AG04449 (cell line): ENCODE measurements at regions of chr21 and their contacts with region 1.

Region 1: GRCh38 chr21:17819114-17819876 is at the start of gene C21orf91:
- DNase-seq: peak; percentile 19
- H3K4me3 ChIP-seq: peak within 1 kb of the TSS; percentile 87
- CTCF ChIP-seq: no peak

Region 2: DNA sequence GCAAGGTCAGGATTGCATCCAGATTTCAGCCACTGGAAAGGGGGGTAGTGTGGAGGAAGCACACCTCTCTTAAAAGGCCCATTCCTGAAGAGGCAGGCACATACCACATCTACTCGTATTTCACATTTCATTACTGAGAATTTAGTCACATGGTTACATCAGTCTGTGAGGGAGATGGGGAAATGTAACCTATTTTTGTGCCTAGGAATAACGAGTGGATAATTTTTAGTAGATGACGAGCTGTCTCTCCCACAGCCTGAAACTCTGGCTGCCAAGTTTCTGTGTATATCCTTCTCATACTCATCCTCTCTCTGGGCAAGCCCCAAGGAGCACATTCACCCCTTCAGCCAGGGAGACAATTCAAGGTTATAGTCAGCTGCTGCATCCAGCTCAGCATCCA is 10.2 kb after region 1 on chr21:
- CTCF ChIA-PET with region 1: interaction called, 5 read pairs
- POLR2A ChIA-PET with region 1: interaction called, 10 read pairs
- DNase-seq: peak; percentile 44
- H3K4me3 ChIP-seq: no peak overlapping the region
- CTCF ChIP-seq: no peak